B cell (primary cell): ENCODE measurements at regions of chr11 and their contacts with region 1.

Region 1: DNA sequence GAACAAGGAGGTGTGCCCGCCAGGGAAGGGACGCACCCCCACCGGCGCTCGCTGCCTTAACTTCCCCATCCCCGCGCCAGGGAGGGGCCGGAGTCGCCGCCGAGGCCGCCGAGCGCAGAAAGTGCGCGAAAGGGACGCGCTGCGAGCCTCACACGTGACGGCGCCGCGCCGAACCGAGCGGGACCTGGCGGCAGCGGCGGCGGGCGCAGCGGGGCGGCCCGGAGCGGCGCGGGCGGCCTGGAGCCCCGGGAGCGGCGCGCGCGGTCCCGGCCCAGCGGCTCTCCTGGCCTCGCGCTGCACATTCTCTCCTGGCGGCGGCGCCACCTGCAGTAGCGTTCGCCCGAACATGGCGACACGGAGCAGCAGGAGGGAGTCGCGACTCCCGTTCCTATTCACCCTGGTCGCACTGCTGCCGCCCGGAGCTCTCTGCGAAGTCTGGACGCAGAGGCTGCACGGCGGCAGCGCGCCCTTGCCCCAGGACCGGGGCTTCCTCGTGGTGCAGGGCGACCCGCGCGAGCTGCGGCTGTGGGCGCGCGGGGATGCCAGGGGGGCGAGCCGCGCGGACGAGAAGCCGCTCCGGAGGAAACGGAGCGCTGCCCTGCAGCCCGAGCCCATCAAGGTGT is at the start of gene SORL1:
- DNase-seq: peak; percentile 78
- ATAC-seq: peak; percentile 54
- H3K4me3 ChIP-seq: peak within 1 kb of the TSS; percentile 63 to 95 (median 76)
- H3K4me3 Mint-ChIP-seq: peak within 1 kb of the TSS; percentile 96
- H3K27ac ChIP-seq: peak within 1 kb of the TSS; percentile 61 to 74
- H3K27ac Mint-ChIP-seq: peak within 1 kb of the TSS; percentile 85
- H3K4me1 ChIP-seq: peaks cover 68 to 71% of the 10 kb centered on the region in 2 donors
- H3K4me1 Mint-ChIP-seq: peaks cover 85% of the 10 kb centered on the region
- H3K27me3 ChIP-seq: peaks cover 0 to 4% (median 0%) of the 10 kb centered on the region in 4 experiments
- H3K27me3 Mint-ChIP-seq: no peaks in the 10 kb centered on the region
- CTCF ChIP-seq: peak; percentile 48
- total RNA-seq, gene SORL1: 396 and 414 TPM in 2 replicates

Region 2: DNA sequence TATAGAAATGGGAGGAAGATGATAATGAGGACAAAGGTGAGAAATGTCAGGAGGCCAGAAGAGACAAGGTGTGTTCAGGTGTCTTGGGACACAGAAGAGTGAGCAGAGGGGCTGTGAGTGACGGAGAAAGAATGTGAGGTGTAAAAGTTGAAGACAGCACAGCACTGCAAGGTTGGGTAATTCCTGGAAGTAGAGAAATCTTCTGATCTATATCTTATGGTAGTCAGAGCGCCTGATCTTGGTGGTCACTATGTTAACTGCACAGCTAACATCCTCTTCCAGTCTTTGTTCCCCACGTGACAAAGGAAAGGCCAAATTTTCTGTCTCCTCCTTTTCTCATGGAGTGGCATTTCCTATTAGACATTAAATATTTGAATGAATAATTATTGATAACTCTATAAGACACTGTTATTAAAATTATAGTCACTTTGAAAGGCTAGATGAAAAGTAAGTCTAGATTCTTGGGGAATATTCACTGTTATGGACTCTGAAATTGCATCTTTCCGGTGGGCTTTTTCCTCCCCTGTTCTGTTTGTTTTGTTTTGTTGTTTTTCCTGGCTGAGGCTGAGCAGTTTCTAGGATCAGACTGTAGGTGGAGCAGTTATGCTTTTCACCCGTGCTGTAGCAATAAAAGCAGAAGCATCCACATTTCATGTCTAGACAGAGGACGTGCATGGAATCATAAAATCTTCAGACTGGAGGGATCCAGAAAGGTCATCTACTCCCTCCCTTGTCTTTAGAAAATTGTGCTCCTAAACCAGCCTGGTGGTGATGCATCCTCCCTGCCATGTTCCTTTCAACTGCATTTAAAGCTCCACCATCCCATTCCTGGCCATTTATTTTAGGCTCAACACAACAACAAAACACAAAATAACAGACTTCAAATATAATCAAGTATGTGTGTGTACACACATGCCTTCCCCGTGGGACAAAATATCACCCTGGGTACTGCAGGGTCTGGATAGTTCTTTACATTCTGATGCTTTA is 133.0 kb before region 1 on chr11:
- CTCF ChIA-PET with region 1: interaction called, 6 read pairs
- POLR2A ChIA-PET with region 1: no interaction called
- intact Hi-C with region 1: loop called (anchors 2 kb)
- DNase-seq: peak; percentile 77
- ATAC-seq: peak; percentile 74
- H3K4me3 ChIP-seq: no peak overlapping the region
- H3K4me3 Mint-ChIP-seq: no peak overlapping the region
- H3K27ac ChIP-seq: no peak overlapping the region
- H3K27ac Mint-ChIP-seq: no peak overlapping the region
- H3K4me1 ChIP-seq: peaks cover 11% of the 10 kb centered on the region in 2 donors
- H3K4me1 Mint-ChIP-seq: peaks cover 17% of the 10 kb centered on the region
- H3K27me3 ChIP-seq: no peaks in the 10 kb centered on the region
- H3K27me3 Mint-ChIP-seq: peaks cover 6% of the 10 kb centered on the region
- CTCF ChIP-seq: peak; percentile 76

Region 3: DNA sequence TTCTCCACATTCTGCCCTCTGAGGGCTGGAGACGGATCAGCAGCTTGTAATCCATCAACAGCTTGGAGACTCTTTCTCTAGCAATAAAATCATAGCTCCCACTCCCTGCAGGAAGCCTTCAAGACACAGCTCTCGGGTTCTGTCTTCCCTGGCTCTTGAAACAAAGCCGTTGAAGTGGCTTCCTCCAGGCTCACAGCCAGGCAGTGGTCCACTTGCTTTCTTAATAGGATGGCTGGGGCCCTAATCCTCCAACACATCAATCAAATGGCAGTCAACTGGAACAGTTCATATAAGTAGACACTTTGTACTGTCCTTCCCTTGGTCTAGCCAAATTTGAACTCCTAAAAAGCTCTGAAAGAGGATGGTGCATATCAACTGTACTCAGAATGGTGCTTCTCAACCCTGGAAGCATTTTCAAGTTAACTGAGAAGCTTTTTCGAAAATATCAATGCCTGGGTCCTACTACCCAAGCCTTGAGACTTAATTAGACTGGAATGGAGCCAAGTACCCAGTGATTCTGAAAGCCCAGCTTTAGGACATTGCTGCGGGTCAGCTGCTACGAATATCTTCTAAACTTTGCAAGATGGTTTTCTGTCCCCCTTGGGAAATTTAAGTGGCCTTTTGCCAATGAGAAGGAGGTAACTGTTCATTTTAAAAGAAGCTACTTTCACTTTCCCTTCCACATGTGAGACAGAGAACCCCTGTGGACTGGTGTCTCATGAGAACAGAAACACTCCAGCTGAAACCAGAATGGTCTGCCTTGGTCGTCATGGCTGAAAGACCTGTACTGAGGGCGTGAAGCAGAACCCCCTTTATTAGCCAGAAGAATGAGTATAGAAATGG is 84.9 kb before region 1 on chr11:
- CTCF ChIA-PET with region 1: interaction called, 18 read pairs
- POLR2A ChIA-PET with region 1: interaction called, 4 read pairs
- intact Hi-C with region 1: loop called (anchors 1 kb)
- DNase-seq: peak; percentile 89
- ATAC-seq: peak; percentile 98
- H3K4me3 ChIP-seq: peak overlapping the region in 3 of 5 experiments; percentile 33 to 40 (median 34)
- H3K4me3 Mint-ChIP-seq: peak overlapping the region; percentile 73
- H3K27ac ChIP-seq: peak overlapping the region; percentile 40 to 52
- H3K27ac Mint-ChIP-seq: peak overlapping the region; percentile 81
- H3K4me1 ChIP-seq: peaks cover 20 to 23% of the 10 kb centered on the region in 2 donors
- H3K4me1 Mint-ChIP-seq: peaks cover 40% of the 10 kb centered on the region
- H3K27me3 ChIP-seq: no peaks in the 10 kb centered on the region
- H3K27me3 Mint-ChIP-seq: peaks cover 4% of the 10 kb centered on the region
- CTCF ChIP-seq: no peak

Region 4: DNA sequence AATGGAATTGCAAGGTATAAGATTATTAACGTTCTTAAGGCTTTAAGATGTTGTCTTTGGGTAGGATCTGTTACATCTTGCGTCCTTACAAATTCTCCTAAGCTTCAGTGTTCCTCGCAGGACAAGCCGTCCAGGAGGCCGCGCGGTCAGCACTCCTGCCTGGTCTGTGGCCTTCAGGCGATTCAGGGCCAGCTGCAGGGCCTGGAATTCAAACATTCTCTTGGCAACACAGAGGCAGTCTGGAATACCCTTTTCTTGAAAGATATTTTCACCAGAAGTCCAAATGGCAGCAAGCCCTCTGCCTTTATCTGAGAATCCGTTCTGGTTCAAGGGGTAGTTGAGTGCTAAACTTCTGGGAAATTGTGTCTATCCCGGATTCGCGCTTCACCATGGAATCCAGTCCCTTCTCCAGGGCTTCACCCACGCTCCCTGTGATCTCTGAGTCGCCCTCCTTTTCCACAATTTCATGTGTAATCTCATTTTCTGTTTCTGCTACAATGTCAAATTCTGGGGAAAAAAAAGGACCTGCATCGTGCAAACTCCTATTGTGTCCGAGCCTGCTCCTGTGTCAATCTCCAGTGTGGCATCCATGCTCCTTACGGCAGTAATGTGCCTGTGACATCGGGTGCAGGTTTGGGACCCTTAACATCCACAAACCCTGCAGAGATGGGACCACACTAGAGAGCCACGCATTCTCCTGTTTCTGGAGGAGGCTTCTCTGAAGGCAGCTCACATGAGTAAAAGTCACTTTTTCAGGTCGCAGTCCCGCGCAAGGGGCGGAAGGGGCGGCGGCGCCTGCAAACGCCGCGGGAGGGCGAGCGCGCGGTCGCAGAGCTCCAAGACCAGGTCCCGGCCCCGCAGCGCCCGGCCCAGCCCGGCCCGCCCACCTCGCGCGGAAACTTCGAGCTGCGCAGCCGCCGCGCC is 25.4 kb before region 1 on chr11:
- CTCF ChIA-PET with region 1: interaction called, 42 read pairs
- POLR2A ChIA-PET with region 1: interaction called, 46 read pairs
- intact Hi-C with region 1: loop called (anchors 1 kb)
- DNase-seq: peak; percentile 77
- ATAC-seq: peak; percentile 48
- H3K4me3 ChIP-seq: peak overlapping the region in 4 of 5 experiments; percentile 25 to 54 (median 43)
- H3K4me3 Mint-ChIP-seq: peak overlapping the region; percentile 77
- H3K27ac ChIP-seq: no peak overlapping the region
- H3K27ac Mint-ChIP-seq: peak overlapping the region; percentile 64
- H3K4me1 ChIP-seq: peaks cover 52 to 63% of the 10 kb centered on the region in 2 donors
- H3K4me1 Mint-ChIP-seq: peaks cover 78% of the 10 kb centered on the region
- H3K27me3 ChIP-seq: no peaks in the 10 kb centered on the region
- H3K27me3 Mint-ChIP-seq: no peaks in the 10 kb centered on the region
- CTCF ChIP-seq: peak; percentile 22

Region 5: GRCh38 chr11:121464352-121464946 is 12.4 kb after region 1 on chr11:
- CTCF ChIA-PET with region 1: interaction called, 29 read pairs
- POLR2A ChIA-PET with region 1: interaction called, 4 read pairs
- intact Hi-C with region 1: loop called (anchors 1 kb)
- DNase-seq: peak; percentile 36
- ATAC-seq: peak; percentile 31
- H3K4me3 ChIP-seq: no peak overlapping the region
- H3K4me3 Mint-ChIP-seq: peak overlapping the region; percentile 63
- H3K27ac ChIP-seq: peak overlapping the region in 1 of 2 donors; percentile 8
- H3K27ac Mint-ChIP-seq: peak overlapping the region; percentile 62
- H3K4me1 ChIP-seq: peaks cover 65 to 80% of the 10 kb centered on the region in 2 donors
- H3K4me1 Mint-ChIP-seq: peaks cover 90% of the 10 kb centered on the region
- H3K27me3 ChIP-seq: no peaks in the 10 kb centered on the region
- H3K27me3 Mint-ChIP-seq: no peaks in the 10 kb centered on the region
- CTCF ChIP-seq: no peak

Region 6: DNA sequence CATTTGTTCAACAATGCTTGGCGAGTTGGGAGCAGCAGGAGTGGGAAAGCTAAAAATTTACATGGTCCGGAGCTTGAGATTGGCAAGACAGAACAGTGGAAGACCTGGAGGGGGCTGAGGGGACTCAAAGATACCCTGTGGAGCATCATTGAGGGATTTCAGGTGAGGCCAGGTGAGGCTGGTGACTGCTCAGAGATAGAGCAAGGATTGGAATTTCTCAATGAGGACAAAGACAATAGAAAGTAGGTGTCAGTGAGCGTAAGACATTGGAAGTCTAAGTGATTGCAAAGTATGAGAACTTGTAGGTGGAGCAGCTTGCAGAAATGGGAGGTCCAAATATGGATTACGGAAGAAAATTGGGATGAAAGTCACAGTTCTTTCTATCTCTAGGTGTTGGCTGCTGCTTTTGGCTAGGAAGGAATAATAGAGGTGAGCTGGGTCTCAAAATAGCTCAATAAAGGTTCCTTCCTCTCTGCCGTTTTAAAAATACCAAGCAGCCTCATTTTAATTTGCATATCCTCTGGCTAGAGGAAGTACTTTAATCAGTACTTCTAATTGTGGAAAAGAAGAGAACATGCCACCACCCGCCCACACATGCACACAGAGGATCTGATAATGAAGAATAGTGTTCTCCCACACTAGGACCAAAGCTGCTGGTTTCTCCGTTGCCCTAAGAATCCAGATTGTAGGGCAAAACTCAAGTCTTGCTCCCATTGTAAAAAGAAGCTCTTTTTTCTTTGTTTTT is 42.4 kb after region 1 on chr11:
- CTCF ChIA-PET with region 1: no interaction called
- POLR2A ChIA-PET with region 1: no interaction called
- intact Hi-C with region 1: loop called (anchors 1 kb)
- DNase-seq: peak; percentile 71
- ATAC-seq: peak; percentile 81
- H3K4me3 ChIP-seq: peak overlapping the region in 3 of 5 experiments; percentile 36 to 45 (median 40)
- H3K4me3 Mint-ChIP-seq: peak overlapping the region; percentile 80
- H3K27ac ChIP-seq: peak overlapping the region; percentile 52 to 59
- H3K27ac Mint-ChIP-seq: peak overlapping the region; percentile 72
- H3K4me1 ChIP-seq: peaks cover 46 to 47% of the 10 kb centered on the region in 2 donors
- H3K4me1 Mint-ChIP-seq: peaks cover 74% of the 10 kb centered on the region
- H3K27me3 ChIP-seq: no peaks in the 10 kb centered on the region
- H3K27me3 Mint-ChIP-seq: no peaks in the 10 kb centered on the region
- CTCF ChIP-seq: no peak